WTC11 (cell line): ENCODE measurements at regions of chr3 and their contacts with region 1.

Region 1: GRCh38 chr3:34012102-34012461 is 213.7 kb downstream of the PDCD6IP start:
- DNase-seq: no peak
- ATAC-seq: no peak
- H3K4me3 Mint-ChIP-seq: no peak overlapping the region
- H3K27ac Mint-ChIP-seq: no peak overlapping the region
- H3K4me1 Mint-ChIP-seq: peaks cover 18% of the 10 kb centered on the region
- H3K27me3 Mint-ChIP-seq: no peaks in the 10 kb centered on the region
- CTCF ChIP-seq: no peak

Region 2: DNA sequence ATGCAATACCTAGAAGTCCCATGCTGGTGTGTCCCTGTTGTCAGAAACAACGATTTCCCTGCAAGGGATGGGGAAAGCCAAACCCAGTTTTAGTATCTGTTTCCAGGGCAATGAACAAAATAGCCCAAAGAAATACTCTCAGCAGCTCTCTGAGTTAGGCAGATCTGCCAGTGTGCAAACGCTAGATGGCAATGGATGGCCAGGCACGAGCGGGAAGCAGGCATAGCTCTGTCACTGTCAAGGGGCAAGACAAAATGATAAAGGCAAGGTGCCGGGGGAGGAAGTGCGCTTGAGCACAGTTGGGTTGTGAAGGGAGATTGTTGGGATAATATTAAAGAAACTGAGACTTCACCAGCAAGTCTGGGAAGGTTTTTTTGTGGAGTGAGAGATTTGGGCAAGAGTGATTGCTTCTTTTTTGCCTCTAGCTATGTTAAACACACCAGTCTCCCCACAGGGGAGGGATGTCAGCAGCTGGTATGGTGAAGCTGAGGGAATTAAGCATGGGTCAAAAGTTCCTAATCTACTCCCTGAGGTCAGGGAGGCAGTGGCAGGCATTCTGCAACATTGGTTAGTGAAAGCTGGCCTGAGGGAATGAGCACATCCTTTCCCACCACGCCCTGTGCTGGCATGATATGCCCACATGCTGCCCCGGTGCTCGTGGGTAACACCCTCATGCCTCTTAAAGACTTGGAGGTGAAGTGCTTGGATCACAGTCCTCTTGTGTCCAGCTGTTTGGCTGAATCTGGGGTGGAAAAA is 96.1 kb before region 1 on chr3:
- CTCF ChIA-PET with region 1: interaction called, 28 read pairs
- POLR2A ChIA-PET with region 1: no interaction called
- DNase-seq: peak; percentile 25
- ATAC-seq: peak; percentile 73
- H3K4me3 Mint-ChIP-seq: no peak overlapping the region
- H3K27ac Mint-ChIP-seq: no peak overlapping the region
- H3K4me1 Mint-ChIP-seq: peaks cover 17% of the 10 kb centered on the region
- H3K27me3 Mint-ChIP-seq: no peaks in the 10 kb centered on the region
- CTCF ChIP-seq: no peak

Region 3: GRCh38 chr3:34053626-34054025 is 41.5 kb after region 1 on chr3:
- CTCF ChIA-PET with region 1: no interaction called
- POLR2A ChIA-PET with region 1: interaction called, 12 read pairs
- DNase-seq: no peak
- ATAC-seq: no peak
- H3K4me3 Mint-ChIP-seq: no peak overlapping the region
- H3K27ac Mint-ChIP-seq: no peak overlapping the region
- H3K4me1 Mint-ChIP-seq: peaks cover 6% of the 10 kb centered on the region
- H3K27me3 Mint-ChIP-seq: no peaks in the 10 kb centered on the region
- CTCF ChIP-seq: no peak

Region 4: DNA sequence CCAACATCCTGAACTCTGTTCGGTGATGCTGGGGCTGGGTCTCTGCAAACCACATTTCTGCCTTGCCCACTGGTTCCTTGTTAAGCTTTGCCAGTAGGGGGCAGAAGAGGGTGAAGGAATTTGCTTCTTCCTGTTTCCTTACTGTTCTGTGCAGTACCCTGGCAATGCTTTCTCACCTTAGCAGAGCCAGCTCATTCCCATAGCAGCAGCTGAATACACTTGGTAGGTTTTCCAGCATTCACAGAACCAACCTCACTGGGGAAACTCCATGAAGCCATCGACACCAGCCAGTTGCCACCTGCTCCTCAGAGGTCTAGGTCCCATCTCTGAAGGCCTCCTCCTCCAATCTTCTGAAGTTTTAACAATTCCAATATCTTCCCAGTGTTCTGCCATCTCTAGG is 94.8 kb after region 1 on chr3:
- CTCF ChIA-PET with region 1: interaction called, 11 read pairs
- POLR2A ChIA-PET with region 1: no interaction called
- DNase-seq: peak; percentile 61
- ATAC-seq: peak; percentile 96
- H3K4me3 Mint-ChIP-seq: no peak overlapping the region
- H3K27ac Mint-ChIP-seq: no peak overlapping the region
- H3K4me1 Mint-ChIP-seq: no peaks in the 10 kb centered on the region
- H3K27me3 Mint-ChIP-seq: no peaks in the 10 kb centered on the region
- CTCF ChIP-seq: peak; percentile 68